B cell (primary cell): ENCODE measurements at regions of chr20 and their contacts with region 1.

Region 1: DNA sequence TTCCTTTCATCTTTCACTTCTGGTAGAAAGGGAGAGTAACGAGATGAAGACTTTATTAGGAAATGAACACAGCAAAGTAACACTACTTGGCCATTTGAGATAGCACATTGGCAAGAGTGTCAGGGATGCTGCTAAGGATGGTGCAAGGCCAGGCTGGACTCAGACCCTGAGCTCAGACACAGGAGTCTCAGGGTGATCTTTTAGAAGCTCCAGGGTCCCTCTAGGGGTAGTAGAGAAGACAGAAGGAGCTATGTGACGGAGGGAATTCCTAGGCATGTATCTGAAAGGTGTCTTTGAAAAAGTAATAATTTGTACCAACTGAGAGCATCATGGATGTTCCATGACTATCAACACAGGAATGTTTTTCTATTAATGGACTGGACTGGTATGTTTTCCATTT is 436.5 kb downstream of the DHX35 start:
- DNase-seq: peak; percentile 8
- ATAC-seq: no peak
- H3K4me3 ChIP-seq: no peak overlapping the region
- H3K4me3 Mint-ChIP-seq: no peak overlapping the region
- H3K27ac ChIP-seq: no peak overlapping the region
- H3K27ac Mint-ChIP-seq: no peak overlapping the region
- H3K4me1 ChIP-seq: no peaks in the 10 kb centered on the region
- H3K4me1 Mint-ChIP-seq: no peaks in the 10 kb centered on the region
- H3K27me3 ChIP-seq: no peaks in the 10 kb centered on the region
- H3K27me3 Mint-ChIP-seq: peaks cover 6% of the 10 kb centered on the region
- CTCF ChIP-seq: no peak

Region 2: DNA sequence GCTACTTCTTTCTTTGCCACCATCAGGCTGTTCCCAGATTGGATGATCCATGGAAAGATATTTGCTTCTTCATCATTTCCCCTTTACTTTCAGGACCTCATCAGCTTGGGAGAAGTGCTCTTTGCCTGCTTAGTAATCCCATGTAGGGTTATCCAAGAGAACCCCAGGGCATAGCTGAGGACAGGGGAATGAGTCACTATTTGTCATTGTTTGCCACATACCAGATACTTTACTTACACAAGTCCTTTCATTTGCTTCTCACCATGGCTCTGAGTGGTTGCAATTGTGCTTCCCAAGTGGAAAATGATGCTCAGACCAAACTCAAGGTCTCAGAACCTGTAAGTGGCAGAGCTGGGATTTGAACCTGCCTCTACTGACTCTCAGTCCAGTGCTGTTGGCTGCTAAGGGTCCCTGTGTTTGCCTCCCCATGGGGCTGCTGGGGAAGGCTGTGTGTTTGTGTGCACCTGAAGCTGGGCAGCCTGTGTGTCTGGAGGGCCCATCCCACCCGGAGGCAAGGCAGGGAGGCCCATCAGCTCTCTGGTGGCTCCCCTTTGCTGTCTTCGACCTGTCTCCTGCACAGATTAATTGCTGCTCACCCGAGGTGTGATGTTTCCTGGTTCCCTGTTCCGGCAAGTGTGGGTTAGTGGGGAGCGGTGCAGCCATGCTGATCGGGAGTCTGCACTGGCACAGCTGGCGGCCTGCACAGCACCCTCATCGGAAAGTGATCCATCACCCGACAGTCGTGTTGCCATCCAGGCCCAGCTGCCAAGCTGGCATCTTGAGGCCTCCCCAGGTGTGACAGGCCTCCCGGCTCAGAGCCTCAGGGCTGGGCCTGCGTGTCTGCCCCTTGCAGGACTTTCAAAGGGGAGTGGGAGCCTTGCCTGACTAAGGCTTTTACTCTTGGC is 207.7 kb before region 1 on chr20:
- CTCF ChIA-PET with region 1: no interaction called
- POLR2A ChIA-PET with region 1: no interaction called
- intact Hi-C with region 1: no loop called
- DNase-seq: no peak
- ATAC-seq: no peak
- H3K4me3 ChIP-seq: no peak overlapping the region
- H3K4me3 Mint-ChIP-seq: no peak overlapping the region
- H3K27ac ChIP-seq: no peak overlapping the region
- H3K27ac Mint-ChIP-seq: no peak overlapping the region
- H3K4me1 ChIP-seq: no peaks in the 10 kb centered on the region
- H3K4me1 Mint-ChIP-seq: no peaks in the 10 kb centered on the region
- H3K27me3 ChIP-seq: peaks cover 0 to 6% (median 0%) of the 10 kb centered on the region in 4 experiments
- H3K27me3 Mint-ChIP-seq: peaks cover 10% of the 10 kb centered on the region
- CTCF ChIP-seq: no peak

Region 3: DNA sequence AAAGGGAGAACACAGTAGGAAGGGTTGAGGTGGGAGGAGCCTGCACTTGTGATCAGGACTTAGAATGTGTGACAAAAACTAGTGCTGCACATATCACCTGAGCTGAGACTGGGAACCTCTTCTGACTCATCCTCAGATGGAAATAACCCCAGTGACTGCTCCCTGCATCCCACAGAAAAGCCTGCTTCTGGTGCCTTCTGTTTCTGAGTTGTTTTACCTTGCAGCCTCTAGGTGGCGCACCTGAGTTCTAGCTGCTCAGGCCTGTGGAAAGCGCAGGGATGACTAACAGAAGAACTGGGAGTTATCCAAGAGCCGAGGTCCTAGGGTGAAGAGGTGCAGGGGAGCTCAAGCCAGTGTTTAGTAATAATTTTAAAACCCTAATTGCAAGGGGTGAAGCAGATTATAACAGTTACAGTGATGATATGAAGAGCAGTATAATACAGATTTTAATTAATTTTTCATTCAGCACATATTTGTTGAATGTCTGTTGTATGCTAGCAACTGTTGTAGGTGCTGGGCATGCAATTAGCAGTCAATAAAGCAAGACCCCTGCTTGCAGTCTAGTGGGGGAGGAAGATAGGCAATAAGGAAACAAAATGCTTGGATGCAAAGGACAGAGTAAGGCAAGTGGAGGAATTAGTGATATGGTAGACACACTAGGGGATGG is 134.0 kb before region 1 on chr20:
- CTCF ChIA-PET with region 1: interaction called, 16 read pairs
- POLR2A ChIA-PET with region 1: no interaction called
- intact Hi-C with region 1: no loop called
- DNase-seq: peak; percentile 46
- ATAC-seq: no peak
- H3K4me3 ChIP-seq: no peak overlapping the region
- H3K4me3 Mint-ChIP-seq: no peak overlapping the region
- H3K27ac ChIP-seq: no peak overlapping the region
- H3K27ac Mint-ChIP-seq: no peak overlapping the region
- H3K4me1 ChIP-seq: no peaks in the 10 kb centered on the region
- H3K4me1 Mint-ChIP-seq: no peaks in the 10 kb centered on the region
- H3K27me3 ChIP-seq: no peaks in the 10 kb centered on the region
- H3K27me3 Mint-ChIP-seq: peaks cover 15% of the 10 kb centered on the region
- CTCF ChIP-seq: peak; percentile 91

Region 4: DNA sequence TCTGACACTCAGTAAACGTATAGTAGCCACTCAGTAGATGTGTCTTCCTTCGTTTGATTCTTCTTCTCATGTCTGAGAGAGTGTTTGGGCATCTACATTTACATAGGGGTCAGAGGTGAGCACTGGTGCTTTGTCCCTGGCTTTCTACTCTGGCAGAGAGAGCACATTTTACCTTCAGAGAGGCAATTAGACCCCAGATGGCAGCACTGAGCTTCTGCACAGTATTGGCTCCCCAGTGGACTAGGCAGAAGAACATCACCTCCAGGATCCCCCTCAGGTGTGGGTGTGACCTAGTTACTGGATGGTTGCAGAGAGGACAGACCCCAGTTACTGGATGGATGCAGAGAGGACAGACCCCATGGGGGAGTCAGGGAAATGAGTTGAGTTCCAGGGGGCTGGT is 109.3 kb before region 1 on chr20:
- CTCF ChIA-PET with region 1: interaction called, 33 read pairs
- POLR2A ChIA-PET with region 1: no interaction called
- intact Hi-C with region 1: no loop called
- DNase-seq: peak; percentile 38
- ATAC-seq: no peak
- H3K4me3 ChIP-seq: no peak overlapping the region
- H3K4me3 Mint-ChIP-seq: no peak overlapping the region
- H3K27ac ChIP-seq: no peak overlapping the region
- H3K27ac Mint-ChIP-seq: no peak overlapping the region
- H3K4me1 ChIP-seq: no peaks in the 10 kb centered on the region
- H3K4me1 Mint-ChIP-seq: peaks cover 3% of the 10 kb centered on the region
- H3K27me3 ChIP-seq: peaks cover 0 to 1% (median 0%) of the 10 kb centered on the region in 4 experiments
- H3K27me3 Mint-ChIP-seq: peaks cover 4% of the 10 kb centered on the region
- CTCF ChIP-seq: peak; percentile 46